GM23248 (cell line): ENCODE measurements at regions of chr20 and their contacts with region 1.

Region 1: DNA sequence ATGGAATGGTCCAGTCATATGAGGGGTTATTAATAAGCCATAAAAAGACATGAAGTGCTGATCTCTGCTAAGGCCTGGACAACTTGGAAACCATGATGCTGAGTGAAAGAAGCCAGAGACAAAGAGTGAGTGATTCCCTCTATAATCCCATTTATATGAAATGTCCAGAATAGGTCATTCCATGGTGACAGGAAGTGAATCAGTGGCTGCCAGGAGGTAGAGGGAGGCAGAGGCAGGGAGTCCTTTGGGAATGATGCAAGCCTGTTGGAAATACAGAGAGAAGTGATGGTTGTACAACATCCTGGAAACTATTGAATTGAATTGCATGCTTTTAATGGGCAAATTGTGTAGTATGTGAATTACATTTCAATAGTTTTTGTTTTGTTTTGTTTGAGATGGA is 26.4 kb downstream of the ANKRD60 start:
- DNase-seq: peak; percentile 46
- H3K4me3 ChIP-seq: no peak overlapping the region
- H3K27ac ChIP-seq: no peak overlapping the region
- H3K4me1 ChIP-seq: peaks cover 8% of the 10 kb centered on the region; the same call in 1 of the 2 replicates
- H3K27me3 ChIP-seq: no peaks in the 10 kb centered on the region

Region 2: GRCh38 chr20:57609861-57610205 is 592.2 kb before region 1 on chr20:
- in situ Hi-C with region 1: loop called (anchors 5 kb)
- DNase-seq: no peak
- H3K4me3 ChIP-seq: no peak overlapping the region
- H3K27ac ChIP-seq: no peak overlapping the region
- H3K4me1 ChIP-seq: no peaks in the 10 kb centered on the region
- H3K27me3 ChIP-seq: peaks cover 12% of the 10 kb centered on the region

Region 3: DNA sequence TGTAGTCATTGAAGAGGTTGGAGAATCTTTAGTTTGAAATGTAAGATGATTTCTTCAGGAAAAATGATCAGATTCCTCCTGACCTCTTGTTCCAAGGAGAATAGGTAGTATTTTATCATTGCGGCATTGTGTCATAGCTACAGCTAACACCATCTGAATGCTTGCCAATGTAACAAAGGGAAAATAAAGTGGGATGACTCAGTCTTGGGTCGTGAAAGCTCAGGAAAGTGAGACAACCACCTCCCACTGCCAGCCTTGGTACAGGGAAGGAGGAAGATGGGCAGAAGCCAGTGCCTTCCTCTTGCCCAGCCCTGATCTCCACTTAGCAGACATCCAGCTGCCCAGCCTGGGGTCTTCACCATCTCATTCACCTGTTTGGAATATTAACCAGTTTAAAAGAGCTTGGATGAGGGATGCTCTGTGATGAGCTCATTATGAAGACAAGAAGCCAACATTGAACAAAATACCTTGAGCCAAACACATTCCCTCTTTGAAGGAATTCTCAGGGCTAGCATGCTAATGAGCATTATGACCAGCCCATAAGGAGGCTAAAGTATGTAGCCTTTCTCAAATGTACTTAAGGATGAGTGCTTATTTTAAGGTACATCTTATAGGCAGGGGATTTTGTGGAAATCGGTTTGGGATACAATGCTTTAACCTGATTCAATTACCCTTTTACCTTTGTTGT is 353.2 kb after region 1 on chr20:
- in situ Hi-C with region 1: no loop called
- DNase-seq: peak; percentile 97
- H3K4me3 ChIP-seq: no peak overlapping the region
- H3K27ac ChIP-seq: peak overlapping the region; percentile 53
- H3K4me1 ChIP-seq: peaks cover 43% of the 10 kb centered on the region
- H3K27me3 ChIP-seq: no peaks in the 10 kb centered on the region